Activated CD4-positive, alpha-beta T cell treated with anti-CD3 and anti-CD28 coated beads for 36 hours (primary cell): ENCODE measurements at regions of chr3 and their contacts with region 1.

Region 1: GRCh38 chr3:53347261-53348064 is at the start of gene DCP1A:
- DNase-seq: peak; percentile 97
- ATAC-seq: peak; percentile 98
- H3K4me3 Mint-ChIP-seq: peak within 1 kb of the TSS; percentile 93
- H3K27ac Mint-ChIP-seq: peak within 1 kb of the TSS; percentile 99
- H3K4me1 Mint-ChIP-seq: peaks cover 21% of the 10 kb centered on the region
- H3K27me3 Mint-ChIP-seq: no peaks in the 10 kb centered on the region
- total RNA-seq, gene DCP1A: 33.4 to 41.9 TPM

Region 2: GRCh38 chr3:52536369-52537164 is 810.9 kb before region 1 on chr3 and contains the start of gene UQCC5:
- CTCF ChIA-PET with region 1: no interaction called
- POLR2A ChIA-PET with region 1: no interaction called
- intact Hi-C with region 1: loop called in 1 of 2 experiments (anchors 5 kb)
- DNase-seq: peak; percentile 99
- ATAC-seq: peak; percentile 91
- H3K4me3 Mint-ChIP-seq: peak within 1 kb of the TSS; percentile 100
- H3K27ac Mint-ChIP-seq: peak within 1 kb of the TSS; percentile 99
- H3K4me1 Mint-ChIP-seq: peaks cover 49% of the 10 kb centered on the region
- H3K27me3 Mint-ChIP-seq: no peaks in the 10 kb centered on the region
- total RNA-seq, gene UQCC5: 12.0 to 12.7 TPM

Region 3: GRCh38 chr3:53114011-53114400 is 233.5 kb before region 1 on chr3:
- CTCF ChIA-PET with region 1: interaction called, 4 read pairs
- POLR2A ChIA-PET with region 1: no interaction called
- intact Hi-C with region 1: loop called in 1 of 2 experiments (anchors 5 kb)
- DNase-seq: peak; percentile 91
- ATAC-seq: peak; percentile 49
- H3K4me3 Mint-ChIP-seq: no peak overlapping the region
- H3K27ac Mint-ChIP-seq: no peak overlapping the region
- H3K4me1 Mint-ChIP-seq: peaks cover 15% of the 10 kb centered on the region
- H3K27me3 Mint-ChIP-seq: no peaks in the 10 kb centered on the region

Region 4: DNA sequence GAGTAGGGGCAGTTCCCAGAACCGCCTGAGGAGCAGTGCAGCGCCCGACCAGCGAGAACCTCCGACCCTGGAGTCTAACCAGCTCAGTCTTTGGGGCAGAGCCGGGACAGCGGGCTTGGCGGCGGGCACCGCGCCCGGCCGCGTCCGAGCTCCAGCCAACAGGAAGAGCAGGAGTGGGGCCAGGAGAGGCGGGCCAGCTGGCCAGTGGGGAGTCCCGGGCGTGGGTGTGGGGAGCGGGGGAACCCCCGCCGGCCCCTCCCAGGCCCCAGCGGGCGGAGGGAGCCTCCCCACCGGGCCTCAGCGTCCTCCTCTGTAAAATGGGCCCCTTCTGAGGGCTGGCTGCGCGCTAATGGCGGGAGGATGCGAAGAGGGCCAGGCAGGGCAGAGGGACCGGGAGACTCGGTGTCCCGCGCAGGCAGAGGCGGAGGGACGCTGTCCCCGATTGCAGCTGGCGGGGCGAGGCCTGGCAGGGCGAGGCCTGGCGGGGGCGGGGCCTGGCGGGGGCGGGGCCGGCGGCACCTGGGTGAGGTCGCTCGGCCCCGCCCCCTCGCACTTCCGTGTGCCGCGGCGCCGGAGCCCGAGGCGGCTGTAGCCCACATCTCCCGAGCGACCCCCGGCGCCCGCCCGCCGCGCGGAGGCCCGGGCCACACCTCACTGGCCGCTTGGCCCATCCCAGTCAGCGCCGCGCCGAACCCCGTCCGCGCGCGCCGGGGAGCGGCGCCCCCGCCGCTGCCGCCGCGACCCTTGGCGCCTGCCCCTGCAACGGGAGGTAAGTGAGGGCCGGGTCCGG is 186.6 kb before region 1 on chr3 and contains the start of gene PRKCD:
- CTCF ChIA-PET with region 1: interaction called, 3 read pairs
- POLR2A ChIA-PET with region 1: no interaction called
- intact Hi-C with region 1: loop called in 1 of 2 experiments (anchors 1 kb)
- DNase-seq: peak; percentile 91
- ATAC-seq: peak; percentile 75
- H3K4me3 Mint-ChIP-seq: peak within 1 kb of the TSS; percentile 75
- H3K27ac Mint-ChIP-seq: peak within 1 kb of the TSS; percentile 83
- H3K4me1 Mint-ChIP-seq: peaks cover 19% of the 10 kb centered on the region
- H3K27me3 Mint-ChIP-seq: peaks cover 10% of the 10 kb centered on the region
- total RNA-seq, gene PRKCD: 22.0 to 26.5 TPM

Region 5: DNA sequence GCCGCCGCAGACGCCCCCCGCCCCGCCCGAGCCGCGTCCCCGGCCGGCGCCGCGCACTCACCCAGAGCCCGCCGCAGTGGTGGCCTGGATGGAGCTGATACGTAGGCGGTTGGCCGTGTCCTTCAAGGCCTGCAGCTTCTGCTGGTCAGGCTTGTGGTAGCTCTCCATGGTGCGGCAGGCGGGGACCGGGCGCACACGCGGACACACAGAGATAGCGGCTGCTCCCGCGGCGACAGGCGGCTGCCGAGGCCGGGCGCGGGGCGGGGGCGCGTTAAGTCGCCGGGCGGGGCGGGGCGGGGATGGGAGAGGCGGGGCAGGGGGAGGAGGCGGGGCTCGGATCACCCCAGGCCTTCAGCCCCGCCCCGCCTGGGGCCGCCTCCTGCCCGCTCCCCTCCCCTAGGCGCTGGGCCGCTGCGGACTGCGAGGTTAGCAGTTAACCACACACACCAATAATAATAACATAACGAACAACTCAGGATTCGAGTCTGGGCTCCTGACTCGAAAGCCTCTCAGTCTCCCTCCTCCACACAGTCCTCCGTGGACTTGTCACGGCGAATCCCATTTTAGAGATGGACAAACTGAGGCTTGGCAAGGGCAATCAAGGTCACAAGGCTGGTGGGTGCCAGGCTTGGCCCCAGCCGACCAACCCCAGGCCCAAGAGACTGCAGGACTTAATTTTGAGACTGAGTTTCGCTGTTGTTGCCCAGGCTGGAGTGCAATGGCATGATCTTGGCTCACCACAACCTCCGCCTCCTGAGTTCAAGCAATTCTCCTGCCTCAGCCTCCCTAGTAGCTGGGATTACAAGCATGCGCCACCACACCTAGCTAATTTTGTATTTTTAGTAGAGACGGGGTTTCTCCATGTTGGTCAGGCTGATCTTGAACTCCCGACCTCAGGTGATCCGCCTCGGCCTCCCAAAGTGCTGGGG is 91.4 kb before region 1 on chr3 and contains the start of gene TKT:
- CTCF ChIA-PET with region 1: interaction called, 4 read pairs
- POLR2A ChIA-PET with region 1: no interaction called
- intact Hi-C with region 1: loop called in 1 of 2 experiments (anchors 1 kb)
- DNase-seq: peak; percentile 92
- ATAC-seq: peak; percentile 85
- H3K4me3 Mint-ChIP-seq: peak within 1 kb of the TSS; percentile 87
- H3K27ac Mint-ChIP-seq: peak within 1 kb of the TSS; percentile 53
- H3K4me1 Mint-ChIP-seq: peaks cover 32% of the 10 kb centered on the region
- H3K27me3 Mint-ChIP-seq: no peaks in the 10 kb centered on the region
- total RNA-seq, gene TKT: 320 to 418 TPM

Region 6: GRCh38 chr3:53881691-53882593 is 534.5 kb after region 1 on chr3 and contains the start of gene ACTR8:
- CTCF ChIA-PET with region 1: no interaction called
- POLR2A ChIA-PET with region 1: no interaction called
- intact Hi-C with region 1: loop called in 1 of 2 experiments (anchors 2 kb)
- DNase-seq: peak; percentile 90
- ATAC-seq: peak; percentile 92
- H3K4me3 Mint-ChIP-seq: peak within 1 kb of the TSS; percentile 100
- H3K27ac Mint-ChIP-seq: peak within 1 kb of the TSS; percentile 99
- H3K4me1 Mint-ChIP-seq: peaks cover 20% of the 10 kb centered on the region
- H3K27me3 Mint-ChIP-seq: no peaks in the 10 kb centered on the region
- total RNA-seq, gene ACTR8: 26.0 to 28.9 TPM